Lower leg skin (tissue), 4 donors: ENCODE measurements at regions of chr22 and their contacts with region 1.

Region 1: DNA sequence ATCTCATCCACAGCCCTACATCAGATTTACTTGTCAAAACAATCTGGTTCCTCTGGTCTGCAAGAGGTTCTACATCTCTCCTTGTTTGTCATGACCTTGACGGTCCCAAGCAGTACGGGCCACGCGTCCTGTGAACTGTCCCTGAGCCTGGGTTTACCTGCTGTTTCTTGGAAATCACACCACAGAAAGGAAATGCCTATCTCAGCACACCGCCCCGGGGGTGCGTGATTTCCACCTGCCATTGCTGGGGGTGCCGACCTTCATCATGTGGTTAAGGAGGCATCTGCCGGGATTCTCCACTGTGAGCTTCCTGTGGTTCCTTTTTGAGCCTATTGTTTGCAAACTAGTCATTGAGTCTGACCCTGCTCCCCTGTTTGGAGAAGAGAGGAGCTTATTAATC is 1363.4 kb downstream of the BRD1 start:
- DNase-seq: peak in 1 of 2 donors; percentile 63
- H3K4me3 ChIP-seq: no peak overlapping the region
- CTCF ChIP-seq: no peak
- POLR2A ChIP-seq: no peak

Region 2: GRCh38 chr22:48340727-48341709 is 123.2 kb before region 1 on chr22:
- intact Hi-C with region 1: no loop called
- DNase-seq: no peak
- H3K4me3 ChIP-seq: no peak overlapping the region
- CTCF ChIP-seq: no peak
- POLR2A ChIP-seq: no peak

Region 3: GRCh38 chr22:48444320-48445112 is 19.7 kb before region 1 on chr22:
- intact Hi-C with region 1: loop called (anchors 1 kb)
- DNase-seq: no peak
- H3K4me3 ChIP-seq: no peak overlapping the region
- CTCF ChIP-seq: no peak
- POLR2A ChIP-seq: no peak

Region 4: GRCh38 chr22:48507595-48508350 is 43.5 kb after region 1 on chr22:
- intact Hi-C with region 1: no loop called
- DNase-seq: no peak
- H3K4me3 ChIP-seq: no peak overlapping the region
- CTCF ChIP-seq: no peak
- POLR2A ChIP-seq: no peak